ENCODE measurements at regions of chr15 and their contacts with region 1.

Region 1: GRCh38 chr15:90387537-90388461 is at the start of gene IQGAP1:
- DNase-seq: peak; percentile 96 to 97 (median 97)
- H3K4me3 ChIP-seq: peak within 1 kb of the TSS; percentile 79 to 91 (median 89)
- H3K4me3 Mint-ChIP-seq: peak within 1 kb of the TSS; percentile 82 to 96
- H3K27ac ChIP-seq: peak within 1 kb of the TSS; percentile 96 to 100
- H3K27ac Mint-ChIP-seq: peak within 1 kb of the TSS; percentile 96 to 99 (median 99)
- H3K4me1 ChIP-seq: peaks cover 41 to 42% of the 10 kb centered on the region in 2 donors
- H3K4me1 Mint-ChIP-seq: peaks cover 43% of the 10 kb centered on the region
- H3K27me3 ChIP-seq: no peaks in the 10 kb centered on the region
- H3K27me3 Mint-ChIP-seq: peaks cover 0 to 5% (median 0%) of the 10 kb centered on the region in 3 donors
- CTCF ChIP-seq: no peak
- polyA plus RNA-seq, gene IQGAP1: 140 to 276 (median 207) TPM

Region 2: DNA sequence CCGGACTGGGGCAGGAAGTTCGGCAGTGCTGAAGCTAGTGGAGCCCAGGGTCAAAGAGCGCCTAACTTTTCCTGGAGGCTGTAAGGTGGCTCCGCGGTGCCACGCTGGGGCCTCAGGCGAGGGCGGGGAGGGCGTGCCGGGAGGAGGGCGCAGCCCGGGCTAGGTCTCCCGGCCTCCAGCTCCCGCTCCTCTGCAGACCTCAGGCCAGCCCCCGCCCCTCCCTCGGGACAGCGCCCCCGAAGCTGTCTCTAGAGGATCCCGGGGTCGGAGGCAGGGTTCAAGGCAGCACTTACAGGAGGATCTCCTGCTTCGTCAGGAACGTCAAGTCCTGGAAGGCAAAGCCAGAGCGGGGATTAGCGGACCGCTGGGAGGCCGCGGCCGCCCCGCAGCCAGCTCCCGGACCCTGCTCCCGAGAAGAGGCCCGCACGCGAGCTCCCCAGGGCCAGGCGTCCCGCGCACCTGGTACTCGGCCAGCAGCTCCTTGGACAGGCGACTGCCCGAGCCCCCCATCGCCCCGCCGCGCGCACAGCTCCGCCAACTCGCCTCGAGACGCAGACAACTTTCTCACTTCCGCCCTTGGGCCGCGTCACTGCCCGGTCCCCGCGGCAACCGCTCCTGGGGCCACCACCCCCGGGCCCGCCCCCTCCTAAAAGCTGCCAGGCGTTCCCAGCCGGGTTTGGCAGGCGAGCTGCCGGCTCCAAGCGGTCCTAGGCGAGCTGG is 154.3 kb before region 1 on chr15 and contains the start of gene CIB1:
- intact Hi-C with region 1: loop called in 1 of 2 experiments (anchors 10 kb)
- DNase-seq: peak; percentile 97 to 98 (median 98)
- H3K4me3 ChIP-seq: peak within 1 kb of the TSS; percentile 73 to 96 (median 91)
- H3K4me3 Mint-ChIP-seq: peak within 1 kb of the TSS; percentile 80 to 90
- H3K27ac ChIP-seq: peak within 1 kb of the TSS; percentile 78 to 95
- H3K27ac Mint-ChIP-seq: peak within 1 kb of the TSS; percentile 88 to 96 (median 93)
- H3K4me1 ChIP-seq: peaks cover 41 to 47% of the 10 kb centered on the region in 2 donors
- H3K4me1 Mint-ChIP-seq: peaks cover 40% of the 10 kb centered on the region
- H3K27me3 ChIP-seq: no peaks in the 10 kb centered on the region
- H3K27me3 Mint-ChIP-seq: peaks cover 0 to 1% (median 0%) of the 10 kb centered on the region in 3 donors
- CTCF ChIP-seq: peak; percentile 66
- polyA plus RNA-seq, gene CIB1: 77.5 to 197 (median 169) TPM

Region 3: GRCh38 chr15:90300988-90301706 is 86.7 kb before region 1 on chr15:
- intact Hi-C with region 1: no loop called
- DNase-seq: peak; percentile 35 to 65 (median 40)
- H3K4me3 ChIP-seq: no peak overlapping the region
- H3K4me3 Mint-ChIP-seq: no peak overlapping the region
- H3K27ac ChIP-seq: no peak overlapping the region
- H3K27ac Mint-ChIP-seq: no peak overlapping the region
- H3K4me1 ChIP-seq: peaks cover 4 to 6% of the 10 kb centered on the region in 2 donors
- H3K4me1 Mint-ChIP-seq: peaks cover 6% of the 10 kb centered on the region
- H3K27me3 ChIP-seq: no peaks in the 10 kb centered on the region
- H3K27me3 Mint-ChIP-seq: peaks cover 0 to 2% (median 0%) of the 10 kb centered on the region in 3 donors
- CTCF ChIP-seq: peak; percentile 93

Region 4: GRCh38 chr15:90352109-90352893 is 35.5 kb before region 1 on chr15 and contains the start of gene ZNF774:
- intact Hi-C with region 1: loop called in 1 of 2 experiments (anchors 5 kb)
- DNase-seq: peak; percentile 90 to 95 (median 94)
- H3K4me3 ChIP-seq: peak within 1 kb of the TSS; percentile 55 to 88 (median 72)
- H3K4me3 Mint-ChIP-seq: peak within 1 kb of the TSS; percentile 89 to 93
- H3K27ac ChIP-seq: peak within 1 kb of the TSS in 1 of 2 donors; percentile 63
- H3K27ac Mint-ChIP-seq: peak within 1 kb of the TSS in 6 of 7 donors; percentile 30 to 90 (median 80)
- H3K4me1 ChIP-seq: peaks cover 14 to 20% of the 10 kb centered on the region in 2 donors
- H3K4me1 Mint-ChIP-seq: peaks cover 16% of the 10 kb centered on the region
- H3K27me3 ChIP-seq: no peaks in the 10 kb centered on the region
- H3K27me3 Mint-ChIP-seq: peaks cover 2 to 6% (median 5%) of the 10 kb centered on the region in 3 donors
- CTCF ChIP-seq: no peak
- polyA plus RNA-seq, gene ZNF774: 0.12 to 0.23 TPM in 2 of 3 donors, not detected in the other

Region 5: DNA sequence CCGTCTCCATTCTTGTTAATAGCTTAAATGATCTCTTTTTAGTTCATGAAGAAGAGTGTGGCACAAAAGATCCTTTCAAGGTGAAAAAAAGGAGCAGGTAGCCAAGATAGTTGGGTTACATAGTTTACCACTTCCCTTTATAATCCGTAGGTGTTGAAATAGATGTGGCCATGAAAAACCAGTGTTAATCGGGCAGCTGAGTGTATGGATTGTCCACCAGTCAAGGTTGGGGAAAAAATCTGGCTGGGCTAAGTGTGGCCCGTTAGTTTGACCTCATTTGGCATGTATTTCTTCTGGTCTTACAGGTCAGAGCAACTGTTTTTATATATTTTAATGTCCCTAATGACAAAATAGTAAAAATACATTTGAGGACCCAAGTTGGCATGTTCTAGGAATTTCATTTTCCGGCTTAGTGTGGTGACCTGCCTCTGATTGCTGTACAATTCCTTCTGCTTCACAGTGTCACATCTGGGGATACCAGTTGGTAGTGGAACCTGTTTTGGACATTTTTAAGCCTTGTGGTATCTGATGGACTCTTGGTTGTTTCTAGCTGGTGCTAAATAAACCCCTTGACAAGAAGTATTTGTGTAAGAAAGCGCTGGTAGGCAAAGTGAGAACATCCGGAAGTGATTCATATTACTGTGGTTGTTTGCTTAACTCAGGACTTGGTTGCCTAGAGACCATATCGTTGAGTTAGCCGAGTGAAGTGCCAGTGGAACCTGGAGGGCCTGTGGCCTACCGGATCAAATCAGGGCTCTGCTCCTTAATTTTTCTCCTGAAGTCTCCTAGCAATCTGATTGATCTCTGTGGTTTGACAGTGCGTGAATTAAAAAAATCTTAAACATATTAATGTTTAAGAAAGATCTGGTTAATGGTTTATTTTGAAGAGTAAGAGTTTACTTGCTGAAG is 12.9 kb after region 1 on chr15:
- intact Hi-C with region 1: loop called in 1 of 2 experiments (anchors 2 kb)
- DNase-seq: peak; percentile 92 to 99 (median 98)
- H3K4me3 ChIP-seq: peak overlapping the region; percentile 11 to 60 (median 41)
- H3K4me3 Mint-ChIP-seq: peak overlapping the region; percentile 66 to 86
- H3K27ac ChIP-seq: peak overlapping the region; percentile 94 to 99
- H3K27ac Mint-ChIP-seq: peak overlapping the region; percentile 99 to 100 (median 99)
- H3K4me1 ChIP-seq: peaks cover 63 to 83% of the 10 kb centered on the region in 2 donors
- H3K4me1 Mint-ChIP-seq: peaks cover 70% of the 10 kb centered on the region
- H3K27me3 ChIP-seq: no peaks in the 10 kb centered on the region
- H3K27me3 Mint-ChIP-seq: no peaks in the 10 kb centered on the region
- CTCF ChIP-seq: no peak

Region 6: GRCh38 chr15:90660195-90660998 is 272.6 kb after region 1 on chr15:
- intact Hi-C with region 1: no loop called
- DNase-seq: peak; percentile 92 to 97 (median 93)
- H3K4me3 ChIP-seq: peak overlapping the region in 1 of 3 experiments; percentile 55
- H3K4me3 Mint-ChIP-seq: peak overlapping the region; percentile 51 to 83
- H3K27ac ChIP-seq: peak overlapping the region; percentile 87 to 92
- H3K27ac Mint-ChIP-seq: peak overlapping the region; percentile 90 to 99 (median 96)
- H3K4me1 ChIP-seq: peaks cover 51 to 63% of the 10 kb centered on the region in 2 donors
- H3K4me1 Mint-ChIP-seq: peaks cover 56% of the 10 kb centered on the region
- H3K27me3 ChIP-seq: no peaks in the 10 kb centered on the region
- H3K27me3 Mint-ChIP-seq: peaks cover 0 to 2% (median 0%) of the 10 kb centered on the region in 3 donors
- CTCF ChIP-seq: no peak